Activated B cell treated with CpG ODN at 0.5 μM for 24 hours (primary cell): ENCODE measurements at regions of chr10 and their contacts with region 1.

Region 1: GRCh38 chr10:125060826-125061556 is 99.4 kb downstream of the CTBP2 start:
- DNase-seq: no peak
- ATAC-seq: no peak
- H3K4me3 Mint-ChIP-seq: no peak overlapping the region
- H3K27ac Mint-ChIP-seq: no peak overlapping the region
- H3K4me1 Mint-ChIP-seq: peaks cover 45% of the 10 kb centered on the region
- H3K27me3 Mint-ChIP-seq: peaks cover 48% of the 10 kb centered on the region
- CTCF ChIP-seq: no peak

Region 2: GRCh38 chr10:125084191-125084613 is 23.2 kb after region 1 on chr10:
- CTCF ChIA-PET with region 1: no interaction called
- POLR2A ChIA-PET with region 1: no interaction called
- intact Hi-C with region 1: no loop called
- DNase-seq: no peak
- ATAC-seq: no peak
- H3K4me3 Mint-ChIP-seq: no peak overlapping the region
- H3K27ac Mint-ChIP-seq: no peak overlapping the region
- H3K4me1 Mint-ChIP-seq: no peaks in the 10 kb centered on the region
- H3K27me3 Mint-ChIP-seq: peaks cover 57% of the 10 kb centered on the region
- CTCF ChIP-seq: no peak

Region 3: GRCh38 chr10:125160856-125161706 is 100.1 kb after region 1 on chr10:
- CTCF ChIA-PET with region 1: no interaction called
- POLR2A ChIA-PET with region 1: interaction called, 5 read pairs
- intact Hi-C with region 1: loop called (anchors 1 kb)
- DNase-seq: no peak
- ATAC-seq: peak; percentile 64
- H3K4me3 Mint-ChIP-seq: peak overlapping the region; percentile 73
- H3K27ac Mint-ChIP-seq: no peak overlapping the region
- H3K4me1 Mint-ChIP-seq: peaks cover 10% of the 10 kb centered on the region
- H3K27me3 Mint-ChIP-seq: peaks cover 27% of the 10 kb centered on the region
- CTCF ChIP-seq: no peak

Region 4: DNA sequence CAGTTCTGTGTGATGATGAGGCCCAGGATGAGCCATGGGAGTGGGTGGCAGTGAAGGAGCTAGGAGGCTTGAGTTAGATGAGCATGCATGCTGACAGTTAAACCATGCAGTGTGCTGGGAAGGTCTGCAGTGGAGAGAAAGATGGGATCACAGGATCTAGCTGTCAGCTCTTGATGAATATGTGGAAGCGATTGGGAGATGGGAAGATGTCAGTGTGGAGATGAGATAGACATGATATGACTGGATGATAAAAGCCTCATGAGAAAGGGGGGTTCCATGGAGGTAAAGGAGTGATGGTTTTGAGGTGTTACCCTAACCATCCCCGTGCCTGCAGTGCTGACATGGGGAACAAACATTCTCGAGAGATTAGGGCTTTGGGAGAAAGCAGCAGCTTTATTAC is 264.3 kb after region 1 on chr10:
- CTCF ChIA-PET with region 1: no interaction called
- POLR2A ChIA-PET with region 1: no interaction called
- intact Hi-C with region 1: no loop called
- DNase-seq: no peak
- ATAC-seq: no peak
- H3K4me3 Mint-ChIP-seq: no peak overlapping the region
- H3K27ac Mint-ChIP-seq: no peak overlapping the region
- H3K4me1 Mint-ChIP-seq: no peaks in the 10 kb centered on the region
- H3K27me3 Mint-ChIP-seq: peaks cover 4% of the 10 kb centered on the region
- CTCF ChIP-seq: no peak